ENCODE measurements at regions of chr15 and their contacts with region 1.

Region 1: GRCh38 chr15:99704444-99704838 is 28.8 kb downstream of the LYSMD4 start:
- DNase-seq: no peak
- H3K4me3 ChIP-seq: no peak overlapping the region
- CTCF ChIP-seq: peak; percentile 60

Region 2: DNA sequence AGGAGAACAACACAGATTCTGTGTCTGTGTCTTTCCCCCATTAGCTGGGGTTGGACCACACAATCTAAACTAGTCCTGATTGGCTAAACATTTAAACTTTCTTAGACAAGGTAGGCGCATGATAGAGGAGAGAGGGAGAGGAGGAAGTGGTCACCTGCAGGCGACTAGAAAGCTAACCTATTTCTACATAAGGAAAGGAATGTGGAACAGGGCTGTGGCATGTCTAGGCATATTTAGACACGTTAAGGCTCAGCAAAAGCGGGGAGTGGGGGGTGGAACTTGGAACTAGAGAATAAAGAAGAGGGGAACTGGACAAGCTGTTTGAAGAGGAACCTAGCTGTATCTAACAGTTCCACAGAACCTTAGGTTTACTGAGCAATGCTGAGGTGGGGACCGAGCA is 440.3 kb before region 1 on chr15:
- CTCF ChIA-PET with region 1: interaction called, 335 read pairs
- POLR2A ChIA-PET with region 1: no interaction called
- DNase-seq: no peak
- H3K4me3 ChIP-seq: no peak overlapping the region
- CTCF ChIP-seq: no peak

Region 3: DNA sequence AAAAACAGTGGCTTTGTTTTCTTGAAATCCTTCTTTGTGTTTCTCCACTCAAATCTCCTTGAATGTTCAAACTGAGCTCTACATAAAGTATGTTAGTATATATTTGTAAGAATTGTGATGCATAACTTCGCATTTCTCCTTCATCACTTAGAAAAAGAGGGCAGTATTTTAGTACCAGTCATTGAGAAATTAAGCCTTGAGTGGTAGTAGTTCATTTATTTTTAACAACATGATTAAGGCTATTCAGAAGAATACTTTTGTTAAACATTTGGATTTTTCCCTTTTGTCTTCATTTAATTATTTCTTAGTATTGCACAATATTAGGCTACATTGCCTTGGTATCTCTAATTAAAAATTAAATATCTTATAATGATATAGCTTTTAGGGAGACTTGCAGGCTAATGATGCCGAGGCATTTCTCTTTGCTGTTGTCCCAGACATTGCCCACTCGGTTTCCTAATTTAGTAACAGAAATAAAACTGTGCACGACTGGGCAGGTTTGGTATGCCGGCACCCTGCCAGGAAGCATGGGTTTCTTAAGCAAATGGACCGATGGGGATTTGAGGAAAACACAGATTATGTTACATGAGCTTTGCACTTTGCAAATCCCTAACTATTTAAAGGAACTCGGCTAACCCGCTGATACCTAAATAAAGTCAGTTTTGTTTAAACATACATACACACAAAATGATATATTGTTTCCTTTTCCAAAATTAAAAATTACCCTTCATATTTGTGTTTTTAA is 398.5 kb before region 1 on chr15:
- CTCF ChIA-PET with region 1: interaction called, 15 read pairs
- POLR2A ChIA-PET with region 1: no interaction called
- DNase-seq: peak; percentile 54
- H3K4me3 ChIP-seq: no peak overlapping the region
- CTCF ChIP-seq: no peak

Region 4: DNA sequence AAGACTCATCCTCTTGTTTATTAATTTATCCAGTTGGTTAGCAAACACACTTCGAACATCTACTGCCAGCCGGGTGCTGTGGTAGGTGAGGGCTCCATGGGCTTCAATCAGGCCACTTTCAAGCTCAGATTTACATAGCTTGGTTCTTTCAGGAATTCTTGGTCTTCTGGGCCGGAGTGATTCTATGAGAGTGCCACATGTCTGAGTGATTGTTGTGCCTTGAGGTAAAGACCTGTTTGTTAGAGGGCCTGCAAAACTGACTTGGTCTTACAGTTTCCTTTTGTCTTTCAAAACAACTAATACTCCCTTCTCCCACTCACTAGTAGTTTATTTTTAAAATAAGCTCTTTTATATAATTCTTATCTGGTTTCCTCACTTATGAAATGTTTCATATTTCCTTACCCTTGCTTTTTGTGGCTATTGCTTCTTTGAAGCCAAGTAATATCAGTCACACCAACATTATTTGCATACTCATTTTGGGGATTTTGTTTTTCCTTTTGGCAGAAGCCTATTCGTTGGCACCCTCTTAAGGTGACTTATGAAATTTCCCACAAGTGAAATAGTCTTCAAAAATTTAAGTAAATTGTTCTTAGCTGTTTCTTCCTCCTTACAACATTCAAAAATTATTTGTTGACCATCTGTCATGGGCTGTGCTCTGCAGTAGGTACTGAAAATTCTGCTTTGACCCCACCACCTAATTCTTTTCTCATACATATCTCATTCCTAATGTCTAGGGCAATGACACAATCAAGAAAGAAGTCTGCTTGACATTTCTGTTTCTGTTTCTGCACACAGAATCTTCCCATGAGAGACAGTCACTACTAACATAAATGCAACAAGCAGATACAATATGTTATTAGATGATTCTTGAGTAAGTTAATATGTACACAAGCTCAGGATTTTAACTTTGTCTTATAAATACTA is 333.0 kb before region 1 on chr15:
- CTCF ChIA-PET with region 1: interaction called, 16 read pairs
- POLR2A ChIA-PET with region 1: no interaction called
- DNase-seq: no peak
- H3K4me3 ChIP-seq: no peak overlapping the region
- CTCF ChIP-seq: no peak

Region 5: DNA sequence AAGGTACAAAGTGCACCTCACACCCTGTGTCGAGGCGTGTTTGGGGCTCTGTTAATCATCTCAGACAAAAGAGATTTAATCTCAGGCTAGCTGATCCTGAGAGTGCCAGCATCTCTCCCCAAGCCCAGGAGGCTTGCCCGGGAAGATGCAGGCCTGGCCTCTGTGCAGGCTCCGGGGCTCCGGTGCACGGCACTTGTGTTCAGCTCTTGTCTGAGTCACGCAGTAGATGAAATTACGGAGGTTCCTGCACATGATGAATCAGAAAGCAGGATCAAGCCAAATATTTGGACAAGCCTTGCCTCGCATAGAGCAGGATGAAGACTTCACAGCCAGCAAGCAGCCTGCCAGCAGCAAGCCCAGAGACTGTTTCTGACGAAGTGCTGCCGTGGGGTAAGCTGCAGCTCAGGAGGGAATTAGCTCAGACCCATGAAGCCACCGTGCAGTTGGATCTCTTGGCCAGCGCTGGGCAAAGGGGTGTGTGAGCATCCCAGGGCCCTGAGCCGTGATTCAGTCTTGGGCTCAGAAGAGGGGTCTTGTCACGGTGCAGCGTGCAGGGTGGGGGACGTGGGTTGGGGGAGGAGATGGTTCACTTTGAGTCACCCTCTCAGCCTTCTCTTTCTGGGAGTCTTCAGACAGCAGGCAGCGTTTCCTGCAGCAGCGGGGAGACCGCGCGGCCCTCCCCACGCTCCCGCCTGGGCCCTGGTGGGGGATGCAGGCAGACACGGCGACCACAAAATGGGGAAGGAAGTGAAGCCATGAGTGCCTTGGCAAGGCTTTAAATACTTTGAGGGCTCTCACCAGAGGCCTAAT is 227.8 kb before region 1 on chr15:
- CTCF ChIA-PET with region 1: interaction called, 22 read pairs
- POLR2A ChIA-PET with region 1: interaction called, 4 read pairs
- DNase-seq: peak; percentile 94
- H3K4me3 ChIP-seq: peak overlapping the region; percentile 44
- CTCF ChIP-seq: no peak

Region 6: DNA sequence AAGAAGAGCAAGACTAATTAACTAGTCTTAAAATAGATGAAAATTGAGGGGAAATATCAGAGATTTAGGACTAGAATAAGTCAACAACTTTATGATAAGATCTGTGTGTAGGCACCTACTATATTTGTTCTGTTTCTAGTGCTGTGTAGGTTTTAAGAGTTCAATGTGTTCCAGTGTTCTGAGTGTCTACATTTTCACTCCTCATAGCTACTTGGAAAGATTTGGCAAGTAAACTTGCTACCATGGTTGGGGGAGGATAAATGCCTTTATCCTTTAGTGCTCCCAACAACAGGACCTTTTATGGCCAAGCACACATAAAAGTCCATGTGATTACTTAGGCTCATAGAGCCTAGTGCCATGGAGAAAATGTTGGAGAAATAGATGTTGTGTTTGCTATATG is 35.2 kb before region 1 on chr15:
- CTCF ChIA-PET with region 1: interaction called, 10 read pairs
- POLR2A ChIA-PET with region 1: no interaction called
- DNase-seq: no peak
- H3K4me3 ChIP-seq: no peak overlapping the region
- CTCF ChIP-seq: no peak

Region 7: GRCh38 chr15:99733268-99734039 is 29.0 kb after region 1 on chr15 and contains the start of gene LYSMD4:
- CTCF ChIA-PET with region 1: interaction called, 46 read pairs
- POLR2A ChIA-PET with region 1: interaction called, 5 read pairs
- DNase-seq: peak; percentile 28
- H3K4me3 ChIP-seq: peak within 1 kb of the TSS; percentile 75
- CTCF ChIP-seq: no peak

Measured in AG04449 (cell line).